Gastrocnemius medialis (tissue), 4 donors: ENCODE measurements at regions of chr18 and their contacts with region 1.

Region 1: DNA sequence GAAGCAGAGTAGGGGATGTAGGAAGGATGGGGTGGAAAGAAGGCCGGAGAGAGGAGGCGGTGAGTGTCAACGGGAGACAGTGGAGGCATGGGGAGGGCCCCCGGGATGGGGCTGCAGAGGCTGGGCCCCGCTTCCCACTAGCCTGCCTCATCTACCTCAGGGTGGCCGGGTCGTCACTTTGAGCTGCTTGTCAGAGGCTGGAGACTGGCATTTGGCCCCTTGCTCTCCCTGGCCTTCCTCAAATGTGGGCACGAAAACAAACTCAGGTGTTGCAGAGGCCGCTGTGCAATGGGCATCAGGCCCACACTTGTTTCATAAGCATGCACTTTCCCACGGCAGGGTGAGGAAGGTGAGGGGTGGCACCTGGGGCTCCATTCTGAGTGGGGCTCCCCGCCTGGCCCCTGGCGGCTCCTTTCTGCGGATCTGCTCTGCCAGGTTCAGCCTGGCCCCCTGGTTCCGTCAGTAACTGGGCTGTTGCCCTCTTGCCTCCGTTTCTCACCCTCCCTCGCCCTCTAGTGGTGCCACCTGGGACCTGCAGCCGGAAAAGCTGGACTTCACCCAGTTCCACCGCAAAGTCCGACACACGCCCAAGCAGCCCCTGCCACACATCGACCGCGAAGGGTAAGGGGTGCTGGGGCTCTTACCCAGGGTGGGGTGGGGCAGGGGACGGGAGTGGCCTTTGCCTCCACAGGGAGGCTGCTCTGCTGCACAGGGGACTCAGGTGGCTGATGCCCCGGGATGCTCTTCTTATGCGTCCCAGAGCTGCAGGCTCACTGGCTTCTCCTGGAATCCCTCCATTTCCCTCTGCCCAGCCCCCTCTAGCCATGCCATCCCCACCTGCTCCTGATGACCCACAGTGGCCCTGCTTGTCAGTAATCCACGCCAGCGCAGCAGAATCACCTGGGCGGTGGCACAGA is 125.4 kb downstream of the CTIF start:
- DNase-seq: peak; percentile 41 to 60
- ATAC-seq: peak; percentile 64 to 70
- H3K4me3 ChIP-seq: no peak overlapping the region
- H3K27ac ChIP-seq: no peak overlapping the region
- H3K4me1 ChIP-seq: peaks cover 6 to 23% of the 10 kb centered on the region in 2 donors
- H3K27me3 ChIP-seq: no peaks in the 10 kb centered on the region
- CTCF ChIP-seq: peak; percentile 81 to 92 (median 90)
- POLR2A ChIP-seq: no peak

Region 2: DNA sequence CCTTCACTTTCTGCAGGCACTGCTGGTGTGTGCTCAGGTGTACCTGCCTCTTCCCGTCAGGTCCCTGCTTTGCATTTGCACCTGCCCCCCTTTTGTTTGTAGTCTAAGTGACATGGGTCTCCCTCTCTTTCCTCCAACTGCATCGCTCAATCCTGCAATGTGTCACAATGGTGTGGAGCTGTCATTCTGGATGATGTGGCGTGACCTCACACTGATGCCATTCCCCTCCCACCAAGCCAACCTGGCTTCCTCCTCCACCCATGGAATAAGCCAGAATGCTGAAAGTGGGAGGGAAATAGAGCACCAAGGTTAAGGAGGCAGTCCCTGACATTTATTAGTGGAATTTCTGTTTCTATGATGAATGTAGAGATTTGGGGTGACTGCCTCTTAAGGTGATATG is 411.7 kb before region 1 on chr18:
- in situ Hi-C with region 1: no loop called
- intact Hi-C with region 1: no loop called
- DNase-seq: no peak
- ATAC-seq: no peak
- H3K4me3 ChIP-seq: no peak overlapping the region
- H3K27ac ChIP-seq: no peak overlapping the region
- H3K4me1 ChIP-seq: no peaks in the 10 kb centered on the region
- H3K27me3 ChIP-seq: no peaks in the 10 kb centered on the region
- CTCF ChIP-seq: no peak
- POLR2A ChIP-seq: no peak

Region 3: DNA sequence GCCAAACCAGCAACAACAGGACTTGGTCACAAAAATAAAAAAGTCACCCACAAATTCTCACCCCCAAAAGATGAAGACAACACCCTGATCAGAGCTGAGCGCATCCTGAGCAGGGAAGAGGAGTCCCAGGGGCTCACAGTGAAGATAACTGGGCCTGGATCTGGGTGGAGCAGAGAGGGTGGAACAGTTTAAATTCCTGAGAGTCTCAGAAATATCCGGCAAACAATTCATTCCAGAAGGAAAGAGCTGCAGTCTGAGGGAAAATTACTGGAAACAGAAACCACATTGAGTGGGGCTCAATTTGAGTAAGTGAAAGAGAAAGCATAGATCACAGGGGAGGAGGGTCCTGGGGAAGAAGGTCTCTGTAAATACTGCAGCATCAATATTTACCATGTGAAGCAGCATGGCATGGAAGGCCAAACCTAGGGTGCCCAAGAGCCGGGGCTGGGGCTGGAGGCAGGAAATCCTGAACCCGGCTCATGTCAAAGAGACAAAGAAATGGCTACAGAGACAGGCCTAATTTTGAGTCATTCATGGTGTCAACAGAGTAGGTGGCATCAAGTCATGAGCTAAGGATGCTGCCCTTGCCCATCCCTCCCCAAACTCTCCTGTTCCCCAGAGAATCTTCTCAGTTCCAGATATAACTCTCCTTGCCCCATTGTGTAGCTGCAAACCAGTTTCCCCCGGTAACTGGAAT is 193.6 kb before region 1 on chr18:
- in situ Hi-C with region 1: loop called (anchors 5 to 10 kb)
- intact Hi-C with region 1: no loop called
- DNase-seq: no peak
- ATAC-seq: peak in 1 of 2 donors; percentile 33
- H3K4me3 ChIP-seq: no peak overlapping the region
- H3K27ac ChIP-seq: peak overlapping the region in 1 of 4 donors; percentile 14
- H3K4me1 ChIP-seq: no peaks in the 10 kb centered on the region
- H3K27me3 ChIP-seq: no peaks in the 10 kb centered on the region
- CTCF ChIP-seq: no peak
- POLR2A ChIP-seq: no peak

Region 4: DNA sequence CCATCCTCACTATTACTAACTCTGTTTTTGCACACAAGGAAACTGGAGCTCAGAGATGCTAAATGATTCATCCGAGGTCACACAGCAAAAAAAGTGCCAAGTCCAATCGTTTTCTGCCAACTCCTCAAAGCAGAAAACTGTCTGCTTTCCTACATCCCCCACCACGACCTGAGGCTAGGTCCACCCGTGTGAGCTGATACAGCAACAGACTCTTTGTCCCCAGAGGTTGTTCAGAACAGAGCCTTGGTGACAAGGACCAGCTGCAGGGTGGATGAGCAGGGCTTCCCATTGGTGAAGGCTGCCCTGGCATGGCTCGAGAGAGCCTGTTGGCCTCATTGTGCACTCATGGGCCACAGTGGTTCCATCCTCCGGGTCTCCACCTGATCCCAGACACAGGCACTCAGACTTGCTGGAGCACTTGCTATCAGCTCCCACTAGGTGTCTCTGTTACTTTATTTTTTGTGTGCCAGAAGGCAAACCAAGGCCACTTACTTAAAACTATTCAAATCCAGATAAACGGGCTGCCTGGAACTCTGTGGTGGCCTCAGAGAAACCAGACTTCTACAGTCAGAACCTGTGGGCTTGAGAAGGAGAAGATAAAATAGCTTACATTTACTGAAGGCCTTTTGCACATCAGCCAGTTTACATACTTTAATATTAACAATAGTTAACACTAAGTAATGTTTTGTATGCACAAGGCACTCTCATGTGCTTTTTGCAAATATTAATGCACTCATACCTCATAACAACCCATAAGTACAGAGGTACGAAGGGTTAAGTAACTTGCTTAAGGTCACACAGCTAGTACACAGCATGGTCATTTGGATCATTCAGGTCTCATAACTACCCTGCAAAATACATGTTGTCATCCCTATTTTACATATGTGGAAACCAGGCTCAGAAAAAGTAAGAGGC is 188.3 kb before region 1 on chr18:
- in situ Hi-C with region 1: loop called (anchors 5 to 10 kb)
- intact Hi-C with region 1: loop called (anchors 1 kb)
- DNase-seq: peak in 1 of 2 donors; percentile 29
- ATAC-seq: peak; percentile 84 to 90
- H3K4me3 ChIP-seq: no peak overlapping the region
- H3K27ac ChIP-seq: no peak overlapping the region
- H3K4me1 ChIP-seq: no peaks in the 10 kb centered on the region
- H3K27me3 ChIP-seq: no peaks in the 10 kb centered on the region
- CTCF ChIP-seq: peak; percentile 66 to 87 (median 83)
- POLR2A ChIP-seq: no peak

Region 5: GRCh38 chr18:48600456-48601090 is 63.6 kb before region 1 on chr18:
- in situ Hi-C with region 1: no loop called
- intact Hi-C with region 1: loop called (anchors 5 kb)
- DNase-seq: peak; percentile 26 to 50
- ATAC-seq: peak; percentile 92 to 97
- H3K4me3 ChIP-seq: no peak overlapping the region
- H3K27ac ChIP-seq: peak overlapping the region in 3 of 4 donors; percentile 11 to 61 (median 45)
- H3K4me1 ChIP-seq: peaks cover 35 to 39% of the 10 kb centered on the region in 2 donors
- H3K27me3 ChIP-seq: no peaks in the 10 kb centered on the region
- CTCF ChIP-seq: no peak
- POLR2A ChIP-seq: no peak

Region 6: DNA sequence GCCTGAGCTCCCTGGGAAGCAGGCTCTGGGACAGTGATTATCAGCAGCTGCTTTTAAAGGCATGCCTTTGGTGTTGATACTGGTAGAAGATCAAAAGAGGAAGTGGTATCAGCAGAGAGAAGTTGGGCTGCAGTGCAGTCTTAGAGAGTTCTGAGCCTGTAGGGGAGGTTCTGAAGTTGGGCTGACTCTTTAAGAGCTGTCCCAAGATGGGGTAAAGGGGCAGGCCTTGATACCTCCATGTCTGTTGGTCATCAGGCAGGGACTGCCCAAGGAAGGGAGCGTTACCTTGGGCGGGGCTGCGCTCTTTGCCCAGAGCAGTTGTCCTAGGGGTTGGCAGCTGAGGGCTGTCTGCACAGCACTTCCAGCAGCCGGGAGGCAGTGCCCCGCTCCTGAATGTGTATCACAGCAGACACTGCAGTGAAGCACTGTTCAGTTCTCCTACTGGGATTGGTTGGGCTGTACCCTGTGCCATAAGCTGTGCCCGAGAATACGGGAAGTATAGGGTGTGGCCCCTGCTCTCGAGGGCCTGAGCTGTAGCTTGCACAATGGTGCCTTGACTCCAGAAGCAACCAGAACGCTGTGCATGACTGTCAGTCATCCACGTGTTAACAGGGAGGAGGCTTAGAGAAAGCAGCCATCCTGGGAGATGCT is 51.6 kb after region 1 on chr18:
- in situ Hi-C with region 1: no loop called
- intact Hi-C with region 1: no loop called
- DNase-seq: peak in 1 of 2 donors; percentile 50
- ATAC-seq: no peak
- H3K4me3 ChIP-seq: no peak overlapping the region
- H3K27ac ChIP-seq: no peak overlapping the region
- H3K4me1 ChIP-seq: peaks cover 21 to 23% of the 10 kb centered on the region in 2 donors
- H3K27me3 ChIP-seq: no peaks in the 10 kb centered on the region
- CTCF ChIP-seq: no peak
- POLR2A ChIP-seq: peak in 1 of 2 donors; percentile 24